ENCODE measurements at regions of chr11 and their contacts with region 1.

Region 1: DNA sequence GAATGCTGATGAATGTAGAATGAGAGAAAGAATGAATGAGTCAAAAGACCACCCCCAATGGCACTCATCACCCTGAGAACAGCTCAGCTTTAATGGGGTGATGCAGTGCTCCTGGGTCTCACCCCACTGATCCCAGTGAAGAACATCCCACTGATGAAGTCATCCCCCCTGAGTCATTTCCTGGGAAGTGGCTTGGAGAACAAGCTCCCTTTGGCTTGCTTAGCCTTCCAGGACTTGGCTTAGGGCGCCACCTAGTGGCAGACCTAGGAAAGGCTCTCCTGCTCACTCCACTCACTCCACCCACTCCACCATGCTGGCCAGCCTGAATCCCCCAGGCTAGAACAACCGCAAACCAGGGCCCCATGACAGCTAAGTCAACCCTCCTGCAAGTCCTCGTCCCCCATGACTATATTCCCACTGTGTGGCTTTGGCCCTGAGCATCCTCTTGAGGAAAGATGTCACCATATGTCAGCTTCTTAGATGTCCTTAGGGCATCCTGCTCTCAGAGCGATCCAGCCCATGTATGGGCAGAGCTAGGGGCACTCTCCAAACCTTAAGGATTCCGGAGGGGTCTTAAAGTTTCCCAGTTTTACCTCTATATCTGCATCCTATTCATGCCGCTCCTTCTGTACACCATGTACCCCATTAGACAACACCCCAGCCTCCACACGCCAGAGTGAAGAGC is 17.8 kb upstream of the TMPRSS13 start:
- DNase-seq: peak; percentile 89

Region 2: DNA sequence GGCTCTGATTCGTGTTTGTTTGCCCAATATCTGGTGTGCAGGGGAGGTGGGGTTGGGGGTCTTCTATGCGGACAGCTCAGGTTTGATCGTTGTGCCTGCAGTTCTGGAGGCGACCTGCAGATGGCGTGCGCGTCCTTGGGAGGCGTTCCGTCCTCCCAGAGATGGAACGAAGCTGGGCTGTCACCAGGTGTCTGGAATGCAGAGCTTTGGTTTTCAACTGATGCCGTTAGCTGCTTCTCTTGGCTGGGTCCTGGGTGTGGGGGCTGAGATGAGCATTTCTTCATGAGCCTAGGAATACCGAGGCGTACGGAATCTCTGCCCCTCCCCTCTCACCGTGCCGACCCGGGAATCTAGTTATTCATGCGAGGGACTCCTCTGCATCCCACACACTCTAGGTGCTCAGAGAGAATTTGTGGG is 520.7 kb before region 1 on chr11:
- in situ Hi-C with region 1: loop called (anchors 25 kb)
- DNase-seq: peak; percentile 54

Region 3: GRCh38 chr11:117833401-117833891 is 113.5 kb before region 1 on chr11:
- in situ Hi-C with region 1: loop called (anchors 10 kb)
- DNase-seq: no peak

Region 4: GRCh38 chr11:118659314-118659952 is 712.4 kb after region 1 on chr11:
- in situ Hi-C with region 1: no loop called
- DNase-seq: peak; percentile 94

Measured in KBM-7 (cell line).